Ovary (tissue), 10 donors: ENCODE measurements at regions of chr20 and their contacts with region 1.

Region 1: DNA sequence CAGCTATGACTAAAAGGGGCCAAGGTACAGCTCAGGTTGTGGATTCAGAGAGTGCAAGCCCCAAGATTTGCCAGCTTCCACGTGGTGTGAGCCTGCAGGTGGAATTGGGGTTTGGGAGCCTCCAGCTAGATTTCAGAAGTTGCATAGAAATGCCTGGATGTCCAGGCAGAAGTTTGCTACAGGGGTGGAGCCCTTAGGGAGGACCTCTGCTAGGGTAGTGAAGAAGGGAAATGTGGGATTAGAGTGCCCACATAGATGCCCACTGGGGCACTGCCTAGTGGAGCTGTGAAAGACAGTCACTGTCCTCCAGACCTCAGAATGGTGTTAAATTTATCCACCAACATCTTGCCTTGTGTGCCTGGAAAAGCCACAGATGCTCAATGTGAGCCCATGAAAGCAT is 255.1 kb downstream of the BMP2 start:
- DNase-seq: no peak
- H3K4me3 ChIP-seq: no peak overlapping the region
- H3K27ac ChIP-seq: no peak overlapping the region
- H3K4me1 ChIP-seq: no peaks in the 10 kb centered on the region
- H3K27me3 ChIP-seq: no peaks in the 10 kb centered on the region
- CTCF ChIP-seq: no peak
- EP300 ChIP-seq: no peak
- POLR2A ChIP-seq: no peak

Region 2: DNA sequence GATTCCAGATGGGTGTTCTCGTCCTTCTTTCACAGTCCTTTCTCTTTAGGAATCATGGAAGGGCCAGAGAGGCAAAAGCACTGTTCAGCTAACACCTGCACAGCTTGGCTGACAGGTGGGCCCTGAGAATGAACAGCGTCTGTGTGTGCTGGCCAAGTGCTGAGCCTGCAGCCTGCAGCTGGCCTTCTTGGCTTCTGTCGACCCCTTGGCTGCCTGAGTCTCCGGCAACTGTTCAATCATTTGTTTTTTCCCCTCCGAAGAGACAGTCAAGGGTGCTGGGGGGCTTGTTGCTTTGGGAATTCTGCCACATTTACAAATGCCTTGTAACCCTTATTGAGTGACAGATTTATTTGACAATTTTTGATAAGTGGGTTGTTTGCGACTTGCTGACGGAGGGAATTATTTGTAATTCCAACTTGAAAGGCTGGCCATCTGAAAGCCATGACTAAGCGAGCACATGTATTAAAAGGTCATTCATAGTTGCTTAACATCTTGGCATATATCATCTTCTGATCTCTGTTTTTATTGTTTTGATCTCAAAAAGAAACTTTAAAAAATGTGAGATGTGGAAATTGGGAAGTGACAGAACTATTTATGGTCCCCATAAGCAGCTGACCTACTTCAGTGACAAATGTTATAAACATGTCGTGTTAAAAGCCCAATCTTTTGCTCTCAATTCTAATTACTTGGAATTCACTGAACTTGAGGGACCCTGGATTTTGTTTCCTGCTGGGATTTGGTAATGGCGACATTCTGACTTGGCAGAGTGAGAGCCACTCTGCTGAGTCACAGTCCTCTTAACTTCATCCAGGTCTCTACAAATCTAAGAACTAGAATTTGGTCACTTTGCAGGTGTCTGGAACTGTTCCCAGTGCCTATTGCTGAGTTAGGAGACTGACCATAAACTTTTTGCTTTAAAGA is 857.9 kb before region 1 on chr20:
- intact Hi-C with region 1: loop called in 1 of 4 experiments (anchors 5 kb)
- DNase-seq: no peak
- H3K4me3 ChIP-seq: no peak overlapping the region
- H3K27ac ChIP-seq: no peak overlapping the region
- H3K4me1 ChIP-seq: no peaks in the 10 kb centered on the region
- H3K27me3 ChIP-seq: no peaks in the 10 kb centered on the region
- CTCF ChIP-seq: no peak
- EP300 ChIP-seq: no peak
- POLR2A ChIP-seq: no peak